Aorta (tissue), 5 donors: ENCODE measurements at regions of chr3 and their contacts with region 1.

Region 1: DNA sequence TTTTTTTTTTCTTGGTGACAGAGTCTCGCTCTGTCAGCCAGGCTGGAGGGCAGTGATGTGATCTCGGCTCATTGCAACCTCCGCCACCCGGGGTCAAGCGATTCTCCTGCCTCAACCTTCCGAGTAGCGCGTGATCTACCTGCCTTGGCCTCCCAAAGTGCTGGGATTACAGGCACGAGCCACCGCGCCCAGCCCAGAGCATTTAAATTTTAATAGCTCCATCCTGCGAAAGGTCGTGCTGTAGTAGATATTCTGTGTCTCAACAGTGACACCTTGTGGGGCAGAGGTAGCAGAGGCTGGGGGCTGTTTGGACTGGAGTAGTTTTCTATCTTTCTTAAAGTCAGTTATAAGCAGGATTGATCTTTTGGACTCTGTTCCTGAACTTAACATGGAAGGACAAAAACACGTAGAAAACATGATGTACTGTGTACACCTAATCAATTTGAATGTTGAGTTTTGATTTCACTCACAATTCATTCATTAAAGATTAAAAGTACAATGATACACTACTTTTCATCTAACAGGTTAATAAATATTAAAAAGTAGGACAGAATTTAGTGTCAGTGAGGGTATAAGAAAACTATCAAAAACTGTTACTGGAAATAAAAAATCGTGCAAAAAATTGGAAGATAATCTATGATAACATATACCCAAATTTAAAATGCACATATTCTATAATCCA is 11.0 kb upstream of the PDCD6IP start:
- DNase-seq: peak in 1 of 2 donors; percentile 52
- ATAC-seq: peak; percentile 90
- H3K4me3 ChIP-seq: peak overlapping the region in 1 of 2 donors; percentile 12
- H3K27ac ChIP-seq: no peak overlapping the region
- H3K4me1 ChIP-seq: peaks cover 0 to 2% of the 10 kb centered on the region in 2 donors
- H3K27me3 ChIP-seq: no peaks in the 10 kb centered on the region

Region 2: DNA sequence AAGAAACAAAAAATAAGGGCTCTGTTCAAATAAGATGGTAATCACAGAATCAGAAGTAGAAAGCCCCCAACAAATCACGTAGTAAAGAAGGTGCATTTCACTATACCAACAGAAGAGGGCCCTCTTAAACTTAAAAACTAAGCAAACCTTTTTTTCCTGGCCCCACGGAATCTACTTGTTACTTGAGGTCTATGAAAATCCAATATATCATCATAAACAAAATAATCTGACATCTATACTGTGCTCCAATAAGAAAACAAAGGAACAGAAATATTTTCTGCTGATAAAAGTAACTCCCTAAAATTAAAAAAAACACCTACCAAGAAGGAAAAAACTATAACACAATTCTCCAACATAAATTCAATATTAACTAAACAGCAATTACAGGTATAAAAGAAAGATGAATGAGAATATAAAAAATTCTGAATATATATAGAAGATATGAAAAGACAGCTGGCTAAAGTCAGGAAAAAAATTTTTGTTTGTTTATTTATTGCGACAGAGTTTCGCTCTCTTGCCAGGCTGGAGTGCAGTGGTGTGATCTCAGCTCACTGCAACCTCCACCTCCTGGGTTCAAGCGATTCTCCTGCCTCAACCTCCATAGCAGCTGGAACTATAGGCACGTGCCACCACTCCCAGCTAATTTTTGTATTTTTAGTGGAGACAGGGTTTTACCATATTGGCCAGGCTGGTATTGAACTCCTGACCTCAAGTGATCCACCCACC is 151.2 kb before region 1 on chr3:
- intact Hi-C with region 1: loop called (anchors 2 kb)
- DNase-seq: no peak
- ATAC-seq: no peak
- H3K4me3 ChIP-seq: no peak overlapping the region
- H3K27ac ChIP-seq: no peak overlapping the region
- H3K4me1 ChIP-seq: no peaks in the 10 kb centered on the region
- H3K27me3 ChIP-seq: no peaks in the 10 kb centered on the region